ENCODE measurements at regions of chr6 and their contacts with region 1.

Region 1: GRCh38 chr6:139219271-139219729 is 72.5 kb downstream of the TXLNB start:
- DNase-seq: peak; percentile 55
- H3K4me3 Mint-ChIP-seq: no peak overlapping the region
- H3K27ac Mint-ChIP-seq: no peak overlapping the region
- H3K4me1 Mint-ChIP-seq: peaks cover 9% of the 10 kb centered on the region
- H3K27me3 Mint-ChIP-seq: peaks cover 3% of the 10 kb centered on the region

Region 2: GRCh38 chr6:139149383-139149782 is 69.9 kb before region 1 on chr6:
- intact Hi-C with region 1: no loop called
- DNase-seq: no peak
- H3K4me3 Mint-ChIP-seq: no peak overlapping the region
- H3K27ac Mint-ChIP-seq: peak overlapping the region; percentile 86
- H3K4me1 Mint-ChIP-seq: peaks cover 86% of the 10 kb centered on the region
- H3K27me3 Mint-ChIP-seq: no peaks in the 10 kb centered on the region

Region 3: GRCh38 chr6:139364302-139364981 is 145.1 kb after region 1 on chr6:
- intact Hi-C with region 1: loop called (anchors 1 kb)
- DNase-seq: no peak
- H3K4me3 Mint-ChIP-seq: no peak overlapping the region
- H3K27ac Mint-ChIP-seq: no peak overlapping the region
- H3K4me1 Mint-ChIP-seq: peaks cover 24% of the 10 kb centered on the region
- H3K27me3 Mint-ChIP-seq: peaks cover 1% of the 10 kb centered on the region